ENCODE measurements at regions of chr9 and their contacts with region 1.

Region 1: GRCh38 chr9:120755827-120756434 is 37.3 kb downstream of the FBXW2 start:
- DNase-seq: peak in 1 of 2 donors; percentile 71
- H3K4me3 ChIP-seq: no peak overlapping the region
- CTCF ChIP-seq: peak in 1 of 3 donors; percentile 78
- POLR2A ChIP-seq: no peak

Region 2: DNA sequence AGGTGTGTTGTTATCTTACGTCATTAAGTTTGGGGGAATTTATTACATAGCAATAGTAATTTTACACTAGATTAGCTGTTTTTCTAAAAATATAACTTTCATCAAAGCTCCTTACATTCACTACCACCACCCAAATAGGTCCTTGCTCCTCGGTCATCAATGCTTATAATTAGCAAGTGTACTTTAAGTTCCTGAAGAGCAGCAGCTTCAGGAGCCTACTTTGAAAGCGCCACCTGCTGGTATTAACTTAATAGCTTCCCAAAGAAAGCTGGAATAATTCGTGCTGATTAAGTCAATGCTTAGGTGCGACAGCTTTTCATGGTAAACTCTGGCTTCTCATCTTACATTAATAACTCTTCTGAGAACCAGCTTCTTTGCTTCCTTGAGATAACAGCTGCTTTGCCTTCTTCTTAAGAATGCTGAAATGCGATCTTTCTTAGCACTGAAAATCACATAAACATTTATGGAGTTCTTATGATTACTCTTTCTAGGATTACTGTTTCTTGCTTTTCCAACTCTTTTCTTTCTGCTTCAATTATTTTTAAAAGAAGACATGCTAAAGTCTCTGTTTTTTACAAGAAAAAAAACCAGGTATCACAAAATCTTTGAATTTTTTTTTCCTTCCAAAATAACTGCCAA is 304.2 kb after region 1 on chr9:
- intact Hi-C with region 1: loop called (anchors 10 kb)
- DNase-seq: peak in 1 of 2 donors; percentile 27
- H3K4me3 ChIP-seq: no peak overlapping the region
- CTCF ChIP-seq: no peak
- POLR2A ChIP-seq: no peak

Measured in lower leg skin (tissue), 4 donors.